ENCODE measurements at regions of chr3 and their contacts with region 1.

Region 1: DNA sequence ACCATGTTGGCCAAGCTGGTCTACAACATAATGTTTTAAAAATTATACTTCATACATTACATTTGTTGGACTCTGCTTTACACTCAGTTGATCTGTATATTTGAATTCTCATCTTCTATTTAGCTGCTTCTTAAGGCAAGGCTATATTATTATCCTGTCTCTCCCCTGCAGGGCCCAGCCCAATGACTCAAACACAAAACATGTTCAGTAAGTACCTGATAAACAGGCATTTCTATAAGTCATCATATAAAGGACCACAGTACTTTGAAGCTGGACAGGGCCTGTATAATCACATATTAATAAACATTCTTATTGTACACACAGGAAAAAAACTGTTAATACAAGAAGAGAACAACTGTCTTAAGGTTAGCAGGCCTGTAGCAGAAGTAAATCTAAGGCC is 36.2 kb downstream of the NGLY1 start:
- DNase-seq: no peak
- ATAC-seq: no peak
- H3K4me3 ChIP-seq: no peak overlapping the region
- H3K4me1 ChIP-seq: no peaks in the 10 kb centered on the region
- CTCF ChIP-seq: no peak

Region 2: DNA sequence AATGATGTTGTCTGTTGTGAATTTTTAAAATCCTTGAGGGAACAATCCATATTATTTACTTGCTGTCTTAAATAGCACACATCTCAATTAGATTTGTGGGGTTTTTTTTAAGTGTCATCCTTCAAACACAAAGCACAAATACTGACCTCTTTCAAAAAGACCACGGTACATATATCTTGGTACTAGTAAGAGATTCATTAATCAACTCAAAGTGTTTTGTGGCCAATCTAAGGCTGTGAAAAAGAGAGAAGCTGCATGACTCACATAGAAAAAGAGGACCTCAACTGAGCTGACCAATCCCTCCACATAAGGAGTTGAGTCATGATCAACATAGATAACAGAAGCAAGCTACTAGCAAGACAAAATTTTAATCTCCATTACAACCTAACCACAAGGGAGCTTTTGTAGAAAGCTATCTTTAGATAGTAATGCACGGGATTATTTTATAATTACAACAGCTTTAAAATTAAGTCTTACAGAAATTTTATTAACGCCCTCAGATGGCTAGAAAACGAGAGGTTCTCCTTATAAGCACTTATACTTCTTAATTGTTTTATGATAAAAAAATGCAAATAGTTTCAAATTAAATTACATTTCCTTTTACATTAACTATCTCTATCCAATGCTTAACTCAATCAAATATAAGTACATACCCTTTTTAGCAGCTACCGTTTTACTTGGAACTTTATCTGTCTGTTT is 142.8 kb before region 1 on chr3:
- intact Hi-C with region 1: loop called in 1 of 2 experiments (anchors 10 kb)
- DNase-seq: no peak
- ATAC-seq: peak; percentile 42
- H3K4me3 ChIP-seq: no peak overlapping the region
- H3K4me1 ChIP-seq: no peaks in the 10 kb centered on the region
- CTCF ChIP-seq: no peak

Measured in mucosa of descending colon (tissue), 3 donors.